ENCODE measurements at regions of chr9 and their contacts with region 1.

Region 1: GRCh38 chr9:133417541-133418461 is at the start of gene REXO4:
- DNase-seq: peak; percentile 92
- ATAC-seq: peak; percentile 78
- H3K4me3 ChIP-seq: peak within 1 kb of the TSS; percentile 74 to 87 (median 81)
- H3K4me3 Mint-ChIP-seq: peak within 1 kb of the TSS; percentile 89
- H3K27ac ChIP-seq: peak within 1 kb of the TSS; percentile 79 to 92
- H3K27ac Mint-ChIP-seq: peak within 1 kb of the TSS; percentile 93
- H3K4me1 ChIP-seq: peaks cover 30 to 63% of the 10 kb centered on the region in 2 donors
- H3K4me1 Mint-ChIP-seq: peaks cover 68% of the 10 kb centered on the region
- H3K27me3 ChIP-seq: no peaks in the 10 kb centered on the region
- H3K27me3 Mint-ChIP-seq: no peaks in the 10 kb centered on the region
- CTCF ChIP-seq: no peak
- total RNA-seq, gene REXO4: 37.1 and 39.9 TPM in 2 replicates

Region 2: DNA sequence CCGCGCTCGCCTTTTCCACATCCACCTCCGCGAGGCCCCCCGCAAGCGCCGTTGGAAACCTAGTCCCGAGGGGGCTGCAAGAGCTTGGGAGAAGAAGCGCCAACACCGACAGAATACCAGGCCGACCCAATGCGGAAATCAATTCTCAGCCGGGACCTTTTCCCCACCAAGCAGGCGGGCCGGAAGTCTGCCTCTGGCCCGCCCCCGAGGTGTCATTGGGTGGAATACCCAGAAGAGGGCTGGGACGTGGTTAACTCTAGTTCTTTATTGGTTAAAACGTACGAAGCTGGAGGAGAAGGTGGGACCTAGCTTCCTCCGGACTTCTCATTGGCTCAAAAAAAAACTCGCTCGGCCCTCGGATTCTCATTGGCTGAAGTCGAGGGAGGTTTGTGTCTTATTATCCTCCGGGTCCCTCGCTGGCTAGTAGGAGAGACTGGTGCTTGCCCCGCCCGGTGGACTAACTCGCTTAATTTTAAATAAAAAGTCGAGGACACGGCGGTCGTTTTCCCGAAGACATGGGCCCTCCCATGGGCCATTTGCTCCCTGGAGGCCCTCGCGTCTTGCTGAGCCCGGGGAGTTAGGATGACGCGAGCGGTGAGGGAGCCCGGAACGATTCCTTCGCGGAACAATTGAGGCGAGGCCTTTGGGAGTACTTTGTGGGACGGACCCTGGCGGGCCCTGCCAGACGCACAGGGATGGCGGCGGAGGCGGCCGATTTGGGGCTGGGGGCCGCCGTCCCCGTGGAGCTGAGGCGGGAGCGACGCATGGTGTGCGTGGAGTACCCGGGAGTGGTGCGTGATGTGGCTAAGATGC is 387.3 kb before region 1 on chr9 and contains the start of gene GTF3C5:
- CTCF ChIA-PET with region 1: no interaction called
- POLR2A ChIA-PET with region 1: no interaction called
- intact Hi-C with region 1: loop called (anchors 5 kb)
- DNase-seq: peak; percentile 97
- ATAC-seq: peak; percentile 96
- H3K4me3 ChIP-seq: peak within 1 kb of the TSS; percentile 87 to 99 (median 95)
- H3K4me3 Mint-ChIP-seq: peak within 1 kb of the TSS; percentile 97
- H3K27ac ChIP-seq: peak within 1 kb of the TSS; percentile 87 to 96
- H3K27ac Mint-ChIP-seq: peak within 1 kb of the TSS; percentile 98
- H3K4me1 ChIP-seq: peaks cover 20 to 24% of the 10 kb centered on the region in 2 donors
- H3K4me1 Mint-ChIP-seq: peaks cover 46% of the 10 kb centered on the region
- H3K27me3 ChIP-seq: no peaks in the 10 kb centered on the region
- H3K27me3 Mint-ChIP-seq: no peaks in the 10 kb centered on the region
- CTCF ChIP-seq: no peak
- total RNA-seq, gene GTF3C5: 77.3 and 80.5 TPM in 2 replicates

Region 3: DNA sequence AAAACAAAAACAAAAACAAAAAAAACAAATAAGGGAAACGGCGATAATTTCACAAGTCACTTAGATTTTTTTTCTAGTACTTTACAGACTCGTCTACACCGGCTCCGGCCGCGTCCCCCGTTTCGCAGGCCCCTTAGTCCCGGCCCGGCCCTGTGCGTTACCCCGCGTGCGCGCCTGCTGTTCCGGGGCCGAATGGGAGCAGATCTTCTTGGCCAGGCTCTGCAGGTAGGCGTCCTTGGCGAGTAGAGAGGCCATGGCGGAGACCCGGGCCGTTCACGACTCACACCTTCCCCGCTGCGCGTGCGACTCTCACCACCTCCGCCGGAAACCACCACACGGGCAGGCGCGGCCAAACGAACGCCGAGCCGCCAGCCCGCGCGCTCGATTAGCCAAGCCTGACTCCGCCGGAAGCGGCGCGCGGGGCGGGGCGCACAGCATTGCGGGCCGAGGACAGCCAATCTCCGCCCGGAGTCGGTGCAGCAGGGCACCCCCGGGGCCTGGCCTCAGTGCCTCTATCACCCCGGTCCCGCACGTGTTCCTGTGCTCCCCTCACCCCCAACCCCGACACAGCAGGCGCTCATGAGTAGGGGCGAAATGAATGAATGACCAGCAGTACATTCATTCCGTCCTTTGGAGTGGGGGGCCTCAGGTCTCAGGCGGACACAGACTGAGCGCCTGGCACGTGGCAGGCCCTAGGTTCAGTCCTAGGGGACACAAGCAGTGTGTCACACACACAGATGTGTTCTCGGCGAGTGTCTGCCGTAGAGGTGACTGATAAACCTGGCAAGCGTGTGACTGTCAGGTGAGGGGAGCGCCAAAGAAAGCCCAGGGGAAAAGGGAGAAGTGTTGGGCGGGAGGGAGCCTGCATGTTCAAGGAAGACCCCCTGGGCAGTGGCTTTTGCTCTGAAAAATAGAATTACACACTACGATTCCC is 81.7 kb before region 1 on chr9 and contains the start of gene SURF6:
- CTCF ChIA-PET with region 1: no interaction called
- POLR2A ChIA-PET with region 1: no interaction called
- intact Hi-C with region 1: loop called (anchors 1 kb)
- DNase-seq: peak; percentile 94
- ATAC-seq: peak; percentile 92
- H3K4me3 ChIP-seq: peak within 1 kb of the TSS; percentile 49 to 90 (median 82)
- H3K4me3 Mint-ChIP-seq: peak within 1 kb of the TSS; percentile 99
- H3K27ac ChIP-seq: peak within 1 kb of the TSS; percentile 76 to 78
- H3K27ac Mint-ChIP-seq: peak within 1 kb of the TSS; percentile 95
- H3K4me1 ChIP-seq: peaks cover 30 to 50% of the 10 kb centered on the region in 2 donors
- H3K4me1 Mint-ChIP-seq: peaks cover 53% of the 10 kb centered on the region
- H3K27me3 ChIP-seq: no peaks in the 10 kb centered on the region
- H3K27me3 Mint-ChIP-seq: no peaks in the 10 kb centered on the region
- CTCF ChIP-seq: no peak
- total RNA-seq, gene SURF6: 24.8 and 25.9 TPM in 2 replicates

Region 4: GRCh38 chr9:133368249-133368881 is 49.4 kb before region 1 on chr9:
- CTCF ChIA-PET with region 1: no interaction called
- POLR2A ChIA-PET with region 1: no interaction called
- intact Hi-C with region 1: no loop called
- DNase-seq: no peak
- ATAC-seq: no peak
- H3K4me3 ChIP-seq: no peak overlapping the region
- H3K4me3 Mint-ChIP-seq: no peak overlapping the region
- H3K27ac ChIP-seq: no peak overlapping the region
- H3K27ac Mint-ChIP-seq: no peak overlapping the region
- H3K4me1 ChIP-seq: peaks cover 23 to 36% of the 10 kb centered on the region in 2 donors
- H3K4me1 Mint-ChIP-seq: peaks cover 46% of the 10 kb centered on the region
- H3K27me3 ChIP-seq: no peaks in the 10 kb centered on the region
- H3K27me3 Mint-ChIP-seq: no peaks in the 10 kb centered on the region
- CTCF ChIP-seq: no peak

Region 5: GRCh38 chr9:133750982-133751649 is 333.3 kb after region 1 on chr9:
- CTCF ChIA-PET with region 1: no interaction called
- POLR2A ChIA-PET with region 1: no interaction called
- intact Hi-C with region 1: no loop called
- DNase-seq: no peak
- ATAC-seq: no peak
- H3K4me3 ChIP-seq: no peak overlapping the region
- H3K4me3 Mint-ChIP-seq: no peak overlapping the region
- H3K27ac ChIP-seq: no peak overlapping the region
- H3K27ac Mint-ChIP-seq: no peak overlapping the region
- H3K4me1 ChIP-seq: no peaks in the 10 kb centered on the region
- H3K4me1 Mint-ChIP-seq: peaks cover 7% of the 10 kb centered on the region
- H3K27me3 ChIP-seq: peaks cover 0 to 15% (median 11%) of the 10 kb centered on the region in 4 experiments
- H3K27me3 Mint-ChIP-seq: peaks cover 47% of the 10 kb centered on the region
- CTCF ChIP-seq: no peak

Measured in B cell (primary cell).